Left ventricle myocardium superior (tissue), 1 donor: ENCODE measurements at regions of chr14 and their contacts with region 1.

Region 1: GRCh38 chr14:65403231-65403630 is 9.3 kb upstream of the FUT8 start:
- DNase-seq: no peak
- ATAC-seq: no peak

Region 2: DNA sequence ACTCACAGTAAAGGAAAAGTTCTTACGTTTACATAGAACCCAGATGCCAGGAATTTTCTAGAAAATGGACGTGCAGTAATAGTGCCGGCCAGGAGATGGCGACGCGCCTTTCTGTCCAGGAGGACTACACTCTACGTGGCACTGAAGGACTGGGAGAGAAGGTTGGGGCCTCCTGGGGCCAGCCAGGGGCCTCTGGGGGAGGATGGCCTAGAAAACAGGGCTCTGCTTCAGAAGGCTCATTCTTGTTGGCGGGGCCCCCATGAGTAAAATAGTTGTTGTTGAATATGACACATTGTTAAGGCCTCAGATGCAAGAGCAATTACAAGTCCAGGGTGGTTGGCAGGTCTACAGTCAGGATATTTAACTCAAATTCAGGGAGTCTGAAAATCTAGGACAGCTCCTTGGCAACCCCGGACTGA is 180.8 kb before region 1 on chr14:
- intact Hi-C with region 1: loop called (anchors 10 kb)
- DNase-seq: peak; percentile 69
- ATAC-seq: peak; percentile 68